WTC11 (cell line): ENCODE measurements at regions of chr5 and their contacts with region 1.

Region 1: DNA sequence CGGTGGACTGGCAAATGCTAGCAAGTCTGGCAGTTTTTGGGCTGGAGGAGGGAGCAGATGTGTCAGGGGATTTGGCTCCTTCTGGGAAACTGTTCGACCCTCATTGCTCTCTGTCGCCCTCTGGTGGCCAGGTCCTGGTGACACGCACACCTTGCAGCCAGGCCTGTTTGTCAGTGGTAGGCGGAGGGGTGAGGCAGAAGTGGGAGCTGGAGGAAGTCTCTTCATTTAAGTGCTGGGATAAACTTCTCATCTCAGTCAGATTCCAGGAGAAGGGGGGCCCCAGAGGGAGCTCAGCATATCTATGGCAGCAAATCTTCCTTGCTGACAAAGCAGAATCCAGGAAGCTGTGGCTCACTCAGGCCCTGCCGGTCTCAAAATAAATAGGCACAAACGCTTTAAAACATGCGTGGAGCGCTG is 326.5 kb downstream of the ZSWIM6 start:
- DNase-seq: peak; percentile 96
- ATAC-seq: peak; percentile 80
- H3K4me3 Mint-ChIP-seq: peak overlapping the region; percentile 59
- H3K27ac Mint-ChIP-seq: no peak overlapping the region
- H3K4me1 Mint-ChIP-seq: peaks cover 33% of the 10 kb centered on the region
- H3K27me3 Mint-ChIP-seq: peaks cover 16% of the 10 kb centered on the region
- CTCF ChIP-seq: peak; percentile 95

Region 2: DNA sequence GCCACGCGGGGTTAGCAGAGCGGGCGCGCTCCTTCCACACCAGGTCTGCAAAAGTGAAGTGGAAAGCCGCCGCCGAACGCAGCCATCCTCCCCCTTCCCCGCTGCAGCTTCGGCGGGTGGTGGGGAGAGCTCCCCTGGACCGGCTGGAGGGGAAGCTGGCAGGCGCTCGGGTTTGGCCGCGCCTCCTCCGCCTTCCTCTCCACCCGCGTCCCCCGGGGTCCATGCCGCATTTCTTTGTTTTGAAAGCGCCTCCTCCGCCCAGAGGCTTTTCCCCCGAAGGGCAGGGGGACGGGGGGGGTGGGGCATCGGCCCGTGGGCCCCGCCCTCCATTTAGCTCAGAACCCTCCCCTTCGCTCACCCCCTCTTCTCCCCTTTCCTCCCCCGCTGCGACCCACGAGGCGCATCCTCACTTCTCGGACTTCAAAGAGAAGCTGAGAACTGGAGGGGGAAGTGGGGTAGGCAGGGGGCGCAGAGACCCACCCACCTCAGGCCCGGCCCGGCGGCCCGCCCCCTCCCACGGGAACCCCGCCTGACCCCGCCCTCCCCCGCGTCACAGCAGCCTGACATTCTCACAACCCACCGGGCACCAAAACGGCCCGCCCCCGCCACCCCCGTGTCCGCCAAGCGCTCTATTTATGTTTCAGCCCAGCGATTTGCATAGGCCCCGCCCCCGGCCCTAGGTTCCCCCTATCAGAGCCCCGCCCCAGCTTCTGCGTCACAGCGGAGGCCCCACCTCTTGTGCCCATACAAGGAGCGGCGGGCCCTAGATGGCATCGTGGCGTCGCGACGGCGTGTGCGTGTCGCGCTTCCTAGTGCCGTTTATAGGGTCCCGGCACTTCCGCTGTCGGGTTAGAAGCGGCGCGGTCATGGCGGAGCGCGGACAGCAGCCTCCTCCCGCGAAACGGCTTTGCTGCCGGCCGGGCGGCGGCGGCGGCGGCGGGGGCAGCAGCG is 326.9 kb before region 1 on chr5 and contains the start of gene ZSWIM6:
- CTCF ChIA-PET with region 1: interaction called, 14 read pairs
- POLR2A ChIA-PET with region 1: no interaction called
- DNase-seq: peak; percentile 98
- ATAC-seq: peak; percentile 83
- H3K4me3 Mint-ChIP-seq: peak within 1 kb of the TSS; percentile 78
- H3K27ac Mint-ChIP-seq: no peak within 1 kb of the TSS
- H3K4me1 Mint-ChIP-seq: peaks cover 51% of the 10 kb centered on the region
- H3K27me3 Mint-ChIP-seq: peaks cover 70% of the 10 kb centered on the region
- CTCF ChIP-seq: no peak
- total RNA-seq, gene ZSWIM6: 12.5 to 14.0 TPM (median 12.7 TPM) in 3 replicates

Region 3: DNA sequence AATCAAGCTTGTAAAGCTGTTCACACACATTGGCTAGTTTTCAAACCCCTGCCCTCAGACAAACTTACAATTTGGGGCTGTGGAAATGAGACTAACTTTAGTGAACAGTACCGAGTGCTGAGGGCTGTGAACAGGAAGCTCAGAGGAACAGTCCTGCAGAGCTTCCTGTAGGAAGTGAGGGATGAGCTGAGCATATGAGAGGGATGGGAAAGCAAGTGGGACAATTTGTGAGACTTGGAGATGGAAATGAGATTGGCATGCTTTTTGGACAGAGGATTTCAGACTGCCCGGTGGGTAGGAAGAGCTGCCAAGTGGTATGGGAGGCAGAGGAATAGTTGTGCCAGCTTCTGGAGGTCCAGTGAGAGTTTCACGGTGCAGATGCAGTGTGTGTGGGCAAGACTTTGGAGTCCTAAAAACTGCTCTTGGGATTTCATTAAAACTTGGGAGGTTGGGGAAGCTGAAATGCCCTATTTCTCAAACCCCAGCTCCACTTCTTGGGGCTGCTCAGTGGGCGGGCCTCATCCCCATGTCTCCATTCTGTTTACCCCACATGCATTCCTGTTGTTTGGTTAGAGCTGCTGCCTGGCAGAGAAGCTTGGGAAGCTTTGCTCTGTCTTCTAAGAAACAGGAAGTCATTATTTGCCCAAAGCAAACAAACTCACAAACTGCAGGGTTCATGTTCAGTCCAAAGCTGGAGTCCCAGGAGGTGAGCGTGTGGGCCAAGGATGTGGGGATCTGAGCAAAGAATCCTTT is 59.1 kb before region 1 on chr5:
- CTCF ChIA-PET with region 1: interaction called, 10 read pairs
- POLR2A ChIA-PET with region 1: no interaction called
- DNase-seq: no peak
- ATAC-seq: peak; percentile 44; the same call in 1 of the 2 replicates
- H3K4me3 Mint-ChIP-seq: no peak overlapping the region
- H3K27ac Mint-ChIP-seq: no peak overlapping the region
- H3K4me1 Mint-ChIP-seq: peaks cover 19% of the 10 kb centered on the region
- H3K27me3 Mint-ChIP-seq: peaks cover 3% of the 10 kb centered on the region; the same call in 1 of the 2 replicates
- CTCF ChIP-seq: no peak

Region 4: GRCh38 chr5:61625681-61626621 is 32.6 kb before region 1 on chr5:
- CTCF ChIA-PET with region 1: interaction called, 14 read pairs
- POLR2A ChIA-PET with region 1: no interaction called
- DNase-seq: peak; percentile 75
- ATAC-seq: peak; percentile 82
- H3K4me3 Mint-ChIP-seq: peak overlapping the region; percentile 70
- H3K27ac Mint-ChIP-seq: no peak overlapping the region
- H3K4me1 Mint-ChIP-seq: peaks cover 30% of the 10 kb centered on the region
- H3K27me3 Mint-ChIP-seq: no peaks in the 10 kb centered on the region
- CTCF ChIP-seq: no peak

Region 5: GRCh38 chr5:61678966-61679365 is 20.4 kb after region 1 on chr5:
- CTCF ChIA-PET with region 1: interaction called, 26 read pairs
- POLR2A ChIA-PET with region 1: no interaction called
- DNase-seq: peak; percentile 49
- ATAC-seq: peak; percentile 98
- H3K4me3 Mint-ChIP-seq: no peak overlapping the region
- H3K27ac Mint-ChIP-seq: no peak overlapping the region
- H3K4me1 Mint-ChIP-seq: peaks cover 17% of the 10 kb centered on the region
- H3K27me3 Mint-ChIP-seq: no peaks in the 10 kb centered on the region
- CTCF ChIP-seq: no peak

Region 6: DNA sequence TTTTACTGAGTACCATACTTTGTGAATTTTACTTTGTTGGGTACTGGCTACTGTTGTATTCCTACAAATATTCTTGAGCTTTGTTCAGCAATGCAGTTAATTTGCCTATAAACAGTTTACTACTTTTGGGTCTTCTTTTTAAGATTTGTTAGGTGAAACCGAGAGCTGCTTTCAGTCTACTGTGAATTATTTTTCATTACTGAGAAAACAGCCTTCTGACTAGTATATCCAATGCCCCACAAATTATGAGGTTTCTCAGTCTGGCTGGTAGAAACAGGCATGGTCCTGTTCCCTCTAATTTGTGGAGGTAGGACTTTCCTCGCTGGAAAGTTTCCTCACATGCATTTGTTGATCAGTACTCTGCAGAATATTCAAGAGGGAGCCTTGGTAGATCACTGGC is 65.5 kb after region 1 on chr5:
- CTCF ChIA-PET with region 1: no interaction called
- POLR2A ChIA-PET with region 1: no interaction called
- DNase-seq: no peak
- ATAC-seq: no peak
- H3K4me3 Mint-ChIP-seq: no peak overlapping the region
- H3K27ac Mint-ChIP-seq: no peak overlapping the region
- H3K4me1 Mint-ChIP-seq: peaks cover 5% of the 10 kb centered on the region; the same call in 1 of the 2 replicates
- H3K27me3 Mint-ChIP-seq: no peaks in the 10 kb centered on the region
- CTCF ChIP-seq: no peak